SK-N-SH (cell line): ENCODE measurements at regions of chr1 and their contacts with region 1.

Region 1: DNA sequence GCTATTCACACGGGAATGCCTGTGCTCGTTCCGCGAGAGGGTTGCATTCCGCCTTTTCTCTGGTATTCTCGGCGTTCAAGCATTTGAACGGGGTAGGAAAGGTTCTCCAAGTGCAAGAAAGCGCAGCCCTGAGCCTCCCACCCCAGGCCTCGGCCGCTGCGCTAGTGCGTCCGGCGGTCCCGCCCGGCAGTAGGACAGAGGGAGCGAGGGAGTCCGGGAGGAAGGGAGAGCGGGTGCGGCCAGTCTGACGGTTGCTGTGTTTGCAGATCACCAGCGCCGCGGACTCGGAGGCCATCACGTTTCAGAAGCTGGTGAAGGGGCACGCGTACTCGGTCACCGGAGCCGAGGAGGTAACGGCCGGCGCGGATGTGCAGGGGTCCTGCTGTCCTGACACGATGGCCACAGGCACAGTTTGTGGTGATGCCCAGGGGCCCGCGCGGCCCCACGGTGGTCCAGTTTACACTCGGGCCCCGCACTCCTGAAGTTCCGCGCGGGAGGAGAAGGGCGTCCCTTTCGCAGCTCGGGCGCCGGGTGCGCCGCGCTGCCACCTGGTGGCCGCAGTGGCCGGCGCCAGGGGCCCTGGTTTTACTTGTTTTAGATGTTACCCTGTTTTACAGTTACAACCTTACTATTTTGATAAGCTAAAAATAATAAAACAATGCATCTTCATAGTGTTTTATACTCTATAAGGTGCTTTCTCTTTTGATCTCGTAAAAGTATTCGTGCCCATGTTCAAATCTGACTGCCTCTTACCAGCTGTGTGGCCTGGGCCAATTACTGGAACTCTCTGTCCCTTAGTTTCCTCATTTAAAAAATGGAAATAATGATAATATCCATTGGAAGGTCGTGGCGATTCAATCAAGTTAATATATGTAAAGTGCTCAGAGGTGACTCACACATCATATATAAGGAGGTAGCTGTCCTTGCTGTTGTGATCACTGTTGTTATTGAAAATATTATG is 36.7 kb downstream of the CAPN2 start:
- DNase-seq: peak; percentile 88
- H3K4me3 ChIP-seq: no peak overlapping the region; a peak in 1 of 4 replicates
- H3K27ac ChIP-seq: peak overlapping the region in 1 of 2 experiments; percentile 55; a peak in 1 of 4 replicates
- H3K4me1 ChIP-seq: peaks cover 8 to 12% of the 10 kb centered on the region in 2 experiments; a peak in 2 of 4 replicates
- H3K27me3 ChIP-seq: no peaks in the 10 kb centered on the region
- CTCF ChIP-seq: peak; percentile 97
- EP300 ChIP-seq: no peak
- RAD21 ChIP-seq: peak; percentile 74

Region 2: GRCh38 chr1:223500560-223501425 is 248.3 kb before region 1 on chr1:
- CTCF ChIA-PET with region 1: no interaction called
- POLR2A ChIA-PET with region 1: no interaction called
- DNase-seq: no peak
- H3K4me3 ChIP-seq: no peak overlapping the region
- H3K27ac ChIP-seq: peak overlapping the region in 1 of 2 experiments; percentile 73; a peak in 2 of 4 replicates
- H3K4me1 ChIP-seq: peaks cover 0 to 13% of the 10 kb centered on the region in 2 experiments; a peak in 3 of 4 replicates
- H3K27me3 ChIP-seq: no peaks in the 10 kb centered on the region
- CTCF ChIP-seq: no peak
- EP300 ChIP-seq: peak in 1 of 2 experiments; percentile 22; a peak in 1 of 4 replicates
- RAD21 ChIP-seq: no peak

Region 3: GRCh38 chr1:223700942-223701637 is 48.0 kb before region 1 on chr1:
- CTCF ChIA-PET with region 1: interaction called, 44 read pairs
- POLR2A ChIA-PET with region 1: no interaction called
- DNase-seq: no peak
- H3K4me3 ChIP-seq: peak overlapping the region in 1 of 2 experiments; percentile 41; a peak in 3 of 4 replicates
- H3K27ac ChIP-seq: peak overlapping the region; percentile 17 to 97; a peak in 3 of 4 replicates
- H3K4me1 ChIP-seq: peaks cover 5 to 41% of the 10 kb centered on the region in 2 experiments; a peak in 3 of 4 replicates
- H3K27me3 ChIP-seq: no peaks in the 10 kb centered on the region
- CTCF ChIP-seq: no peak
- EP300 ChIP-seq: peak in 1 of 2 experiments; percentile 83; a peak in 2 of 4 replicates
- RAD21 ChIP-seq: no peak

Region 4: GRCh38 chr1:223726380-223727001 is 22.6 kb before region 1 on chr1:
- CTCF ChIA-PET with region 1: interaction called, 45 read pairs
- POLR2A ChIA-PET with region 1: no interaction called
- DNase-seq: peak; percentile 58
- H3K4me3 ChIP-seq: no peak overlapping the region
- H3K27ac ChIP-seq: peak overlapping the region; percentile 74 to 87
- H3K4me1 ChIP-seq: peaks cover 41 to 42% of the 10 kb centered on the region in 2 experiments
- H3K27me3 ChIP-seq: no peaks in the 10 kb centered on the region
- CTCF ChIP-seq: no peak
- EP300 ChIP-seq: peak in 1 of 2 experiments; percentile 85; a peak in 2 of 4 replicates
- RAD21 ChIP-seq: no peak

Region 5: GRCh38 chr1:223738465-223739365 is 10.3 kb before region 1 on chr1:
- CTCF ChIA-PET with region 1: interaction called, 44 read pairs
- POLR2A ChIA-PET with region 1: no interaction called
- DNase-seq: no peak
- H3K4me3 ChIP-seq: no peak overlapping the region
- H3K27ac ChIP-seq: no peak overlapping the region
- H3K4me1 ChIP-seq: peaks cover 5 to 17% of the 10 kb centered on the region in 2 experiments; a peak in 2 of 4 replicates
- H3K27me3 ChIP-seq: no peaks in the 10 kb centered on the region
- CTCF ChIP-seq: no peak
- EP300 ChIP-seq: no peak
- RAD21 ChIP-seq: no peak

Region 6: DNA sequence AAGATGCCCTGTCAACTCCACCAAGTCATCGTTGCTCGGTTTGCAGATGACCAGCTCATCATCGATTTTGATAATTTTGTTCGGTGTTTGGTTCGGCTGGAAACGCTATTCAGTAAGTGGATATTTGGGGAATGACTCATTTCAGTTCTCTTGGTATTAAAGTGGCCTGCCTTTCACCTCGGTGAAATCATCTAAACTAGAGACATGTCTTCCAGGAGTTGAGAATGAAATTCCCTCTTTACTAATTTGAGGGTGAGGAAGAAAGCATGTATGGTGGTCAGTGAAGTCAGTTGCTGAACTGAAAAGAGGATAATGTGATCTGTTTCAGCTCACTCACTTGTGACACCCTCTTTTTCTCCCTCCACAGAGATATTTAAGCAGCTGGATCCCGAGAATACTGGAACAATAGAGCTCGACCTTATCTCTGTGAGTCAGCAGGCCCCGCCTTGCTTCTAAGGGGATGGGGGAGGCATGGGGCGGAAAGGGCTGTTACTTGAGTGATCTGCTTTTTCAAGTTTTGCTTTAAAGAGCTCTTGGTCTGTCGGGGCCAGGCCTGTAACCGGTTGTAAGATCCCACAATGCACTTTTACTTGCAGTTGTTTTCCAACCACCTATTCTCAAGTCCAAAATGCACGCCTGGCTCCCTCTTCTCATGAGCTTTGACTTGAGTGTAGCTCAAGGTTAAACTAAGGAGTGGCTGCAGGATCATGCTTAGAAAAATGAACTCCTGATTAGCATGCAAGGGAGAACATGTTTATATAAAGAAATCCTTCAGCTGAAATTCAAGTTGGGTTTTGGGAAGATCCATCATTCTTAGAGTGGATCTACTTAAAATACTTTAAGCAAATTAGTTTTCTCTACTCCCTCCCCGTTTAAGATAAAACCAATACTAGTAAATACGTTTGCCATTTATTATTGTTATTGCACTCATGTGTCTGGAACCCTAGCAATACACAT is 23.0 kb after region 1 on chr1:
- CTCF ChIA-PET with region 1: interaction called, 14 read pairs
- POLR2A ChIA-PET with region 1: no interaction called
- DNase-seq: no peak
- H3K4me3 ChIP-seq: peak overlapping the region in 1 of 2 experiments; percentile 30; a peak in 2 of 4 replicates
- H3K27ac ChIP-seq: peak overlapping the region; percentile 90 to 96
- H3K4me1 ChIP-seq: peaks cover 9 to 44% of the 10 kb centered on the region in 2 experiments
- H3K27me3 ChIP-seq: no peaks in the 10 kb centered on the region
- CTCF ChIP-seq: no peak
- EP300 ChIP-seq: peak in 1 of 2 experiments; percentile 59; a peak in 1 of 4 replicates
- RAD21 ChIP-seq: no peak